B cell (primary cell): ENCODE measurements at regions of chr14 and their contacts with region 1.

Region 1: GRCh38 chr14:92600318-92601053 is 86.9 kb downstream of the RIN3 start:
- DNase-seq: no peak
- ATAC-seq: no peak
- H3K4me3 ChIP-seq: no peak overlapping the region
- H3K4me3 Mint-ChIP-seq: no peak overlapping the region
- H3K27ac ChIP-seq: no peak overlapping the region
- H3K27ac Mint-ChIP-seq: peak overlapping the region; percentile 2
- H3K4me1 ChIP-seq: peaks cover 0 to 13% of the 10 kb centered on the region in 2 donors
- H3K4me1 Mint-ChIP-seq: peaks cover 38% of the 10 kb centered on the region
- H3K27me3 ChIP-seq: no peaks in the 10 kb centered on the region
- H3K27me3 Mint-ChIP-seq: no peaks in the 10 kb centered on the region
- CTCF ChIP-seq: no peak

Region 2: GRCh38 chr14:92726429-92727262 is 126.2 kb after region 1 on chr14:
- CTCF ChIA-PET with region 1: no interaction called
- POLR2A ChIA-PET with region 1: interaction called, 10 read pairs
- intact Hi-C with region 1: no loop called
- DNase-seq: no peak
- ATAC-seq: no peak
- H3K4me3 ChIP-seq: no peak overlapping the region
- H3K4me3 Mint-ChIP-seq: no peak overlapping the region
- H3K27ac ChIP-seq: no peak overlapping the region
- H3K27ac Mint-ChIP-seq: no peak overlapping the region
- H3K4me1 ChIP-seq: peaks cover 0 to 6% of the 10 kb centered on the region in 2 donors
- H3K4me1 Mint-ChIP-seq: peaks cover 14% of the 10 kb centered on the region
- H3K27me3 ChIP-seq: no peaks in the 10 kb centered on the region
- H3K27me3 Mint-ChIP-seq: no peaks in the 10 kb centered on the region
- CTCF ChIP-seq: no peak